ENCODE measurements at regions of chr5 and their contacts with region 1.

Region 1: GRCh38 chr5:148740966-148741742 is 85.3 kb upstream of the ADRB2 start:
- DNase-seq: no peak
- ATAC-seq: peak; percentile 78
- H3K4me3 ChIP-seq: no peak overlapping the region
- H3K27ac ChIP-seq: no peak overlapping the region
- H3K4me1 ChIP-seq: no peaks in the 10 kb centered on the region
- H3K27me3 ChIP-seq: no peaks in the 10 kb centered on the region
- CTCF ChIP-seq: peak; percentile 57 to 73 (median 71)
- EP300 ChIP-seq: no peak
- POLR2A ChIP-seq: no peak
- RAD21 ChIP-seq: peak; percentile 74

Region 2: GRCh38 chr5:148760945-148761638 is 19.9 kb after region 1 on chr5:
- CTCF ChIA-PET with region 1: interaction called, 12 read pairs
- POLR2A ChIA-PET with region 1: no interaction called
- RAD21 ChIA-PET with region 1: interaction called, 6 read pairs
- SMC1A ChIA-PET with region 1: interaction called, 6 read pairs
- in situ Hi-C with region 1: no loop called
- intact Hi-C with region 1: no loop called
- DNase-seq: peak; percentile 59
- ATAC-seq: peak; percentile 100
- H3K4me3 ChIP-seq: no peak overlapping the region
- H3K27ac ChIP-seq: no peak overlapping the region
- H3K4me1 ChIP-seq: peaks cover 8% of the 10 kb centered on the region
- H3K27me3 ChIP-seq: no peaks in the 10 kb centered on the region
- CTCF ChIP-seq: no peak
- EP300 ChIP-seq: no peak
- POLR2A ChIP-seq: no peak
- RAD21 ChIP-seq: no peak

Region 3: DNA sequence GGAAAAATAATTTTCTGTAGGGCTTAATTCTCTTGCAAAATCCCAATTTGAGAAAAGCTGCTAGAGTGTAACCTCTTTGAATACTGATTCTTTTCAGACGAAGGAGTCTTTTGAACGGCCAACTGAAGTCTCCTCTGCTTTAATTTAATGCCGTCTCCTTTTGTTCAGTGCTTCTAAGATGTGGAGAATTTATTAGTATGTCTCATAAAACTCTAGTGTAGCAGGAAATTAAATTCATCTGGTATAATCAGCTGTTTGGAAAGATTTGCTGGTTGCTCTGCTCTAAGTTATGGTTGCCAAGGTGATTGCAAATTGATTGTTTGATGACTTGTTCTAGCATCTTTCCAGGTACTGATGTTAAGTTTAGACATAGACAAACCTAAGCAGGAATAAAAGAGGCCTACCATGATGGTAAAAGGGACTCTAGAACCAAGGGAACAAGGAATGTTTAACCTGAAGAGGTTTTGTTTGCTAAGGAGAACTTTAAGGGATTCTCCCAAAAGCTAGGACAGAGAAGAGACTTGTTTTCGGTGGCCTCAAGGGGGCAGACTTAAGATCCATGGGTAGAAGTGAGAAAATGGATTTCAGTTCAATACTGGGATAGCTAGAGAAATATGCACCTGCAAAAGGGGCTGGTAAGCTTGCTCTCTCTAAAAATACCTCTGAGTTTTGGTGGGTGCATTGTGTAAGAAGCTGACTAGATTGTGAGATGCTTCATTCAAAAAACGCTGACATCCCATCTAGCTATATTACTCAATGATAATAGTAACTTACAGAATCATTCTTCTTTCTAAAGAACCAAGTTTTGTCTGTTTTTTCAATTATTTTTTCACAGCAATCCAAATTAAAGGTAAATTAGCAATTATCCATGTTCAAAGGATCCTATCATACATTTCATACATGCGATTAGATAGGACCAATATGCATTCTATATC is 79.6 kb after region 1 on chr5:
- CTCF ChIA-PET with region 1: interaction called, 66 read pairs
- POLR2A ChIA-PET with region 1: no interaction called
- RAD21 ChIA-PET with region 1: interaction called, 4 read pairs
- SMC1A ChIA-PET with region 1: interaction called, 9 read pairs
- in situ Hi-C with region 1: no loop called
- intact Hi-C with region 1: no loop called
- DNase-seq: no peak
- ATAC-seq: peak; percentile 76
- H3K4me3 ChIP-seq: no peak overlapping the region
- H3K27ac ChIP-seq: no peak overlapping the region
- H3K4me1 ChIP-seq: peaks cover 5% of the 10 kb centered on the region
- H3K27me3 ChIP-seq: no peaks in the 10 kb centered on the region
- CTCF ChIP-seq: peak; percentile 49 to 59 (median 59); a peak in 5 of 6 replicates
- EP300 ChIP-seq: no peak
- POLR2A ChIP-seq: no peak
- RAD21 ChIP-seq: peak; percentile 41

Region 4: GRCh38 chr5:148831590-148832565 is 90.7 kb after region 1 on chr5:
- CTCF ChIA-PET with region 1: interaction called, 10 read pairs
- POLR2A ChIA-PET with region 1: no interaction called
- RAD21 ChIA-PET with region 1: interaction called, 3 read pairs
- SMC1A ChIA-PET with region 1: interaction called, 20 read pairs
- in situ Hi-C with region 1: no loop called
- intact Hi-C with region 1: loop called (anchors 2 kb)
- DNase-seq: peak; percentile 59
- ATAC-seq: peak; percentile 92
- H3K4me3 ChIP-seq: 0 out of 2 replicates have a peak overlapping the region, but pooled peaks have one; percentile 28
- H3K27ac ChIP-seq: peak overlapping the region; percentile 40
- H3K4me1 ChIP-seq: peaks cover 31% of the 10 kb centered on the region
- H3K27me3 ChIP-seq: no peaks in the 10 kb centered on the region; a peak in 1 of 4 replicates
- CTCF ChIP-seq: no peak
- EP300 ChIP-seq: peak in 1 of 2 experiments; percentile 76; a peak in 2 of 4 replicates
- POLR2A ChIP-seq: no peak
- RAD21 ChIP-seq: no peak

Region 5: GRCh38 chr5:148957591-148958202 is 216.5 kb after region 1 on chr5:
- CTCF ChIA-PET with region 1: interaction called, 523 read pairs
- POLR2A ChIA-PET with region 1: no interaction called
- RAD21 ChIA-PET with region 1: interaction called, 104 read pairs
- SMC1A ChIA-PET with region 1: interaction called, 143 read pairs
- in situ Hi-C with region 1: loop called (anchors 5 kb)
- intact Hi-C with region 1: loop called (anchors 1 kb)
- DNase-seq: no peak
- ATAC-seq: peak; percentile 82
- H3K4me3 ChIP-seq: no peak overlapping the region
- H3K27ac ChIP-seq: no peak overlapping the region
- H3K4me1 ChIP-seq: no peaks in the 10 kb centered on the region
- H3K27me3 ChIP-seq: no peaks in the 10 kb centered on the region
- CTCF ChIP-seq: peak; percentile 75 to 87 (median 77)
- EP300 ChIP-seq: no peak
- POLR2A ChIP-seq: no peak
- RAD21 ChIP-seq: peak; percentile 83

Region 6: DNA sequence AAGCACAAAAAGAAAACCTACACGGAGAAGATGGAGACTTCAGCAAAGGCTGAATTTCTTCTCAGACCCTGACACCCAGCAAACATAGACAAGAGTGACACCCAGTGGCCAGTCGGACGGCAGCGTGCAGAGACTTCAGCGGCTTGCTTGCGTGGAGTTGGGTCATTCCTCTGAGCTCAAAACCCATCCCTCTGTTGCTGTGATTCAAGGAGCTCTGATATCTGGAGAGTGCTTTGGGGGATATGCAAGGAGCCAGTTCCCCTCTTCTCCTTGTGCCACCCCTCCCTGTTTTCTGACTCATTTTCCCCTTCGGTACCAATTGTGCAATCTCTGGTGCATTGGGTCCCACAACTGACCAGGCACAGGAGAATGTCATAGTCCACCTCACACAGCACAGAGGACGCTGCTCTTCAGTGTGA is 294.2 kb after region 1 on chr5:
- CTCF ChIA-PET with region 1: interaction called, 335 read pairs
- POLR2A ChIA-PET with region 1: no interaction called
- RAD21 ChIA-PET with region 1: interaction called, 91 read pairs
- SMC1A ChIA-PET with region 1: interaction called, 101 read pairs
- in situ Hi-C with region 1: loop called (anchors 5 kb)
- intact Hi-C with region 1: no loop called
- DNase-seq: no peak
- ATAC-seq: peak; percentile 98
- H3K4me3 ChIP-seq: no peak overlapping the region
- H3K27ac ChIP-seq: no peak overlapping the region
- H3K4me1 ChIP-seq: no peaks in the 10 kb centered on the region
- H3K27me3 ChIP-seq: no peaks in the 10 kb centered on the region
- CTCF ChIP-seq: peak; percentile 82 to 91 (median 88)
- EP300 ChIP-seq: no peak
- POLR2A ChIP-seq: no peak
- RAD21 ChIP-seq: peak; percentile 87

Region 7: GRCh38 chr5:149049371-149049781 is 308.2 kb after region 1 on chr5:
- CTCF ChIA-PET with region 1: no interaction called
- POLR2A ChIA-PET with region 1: no interaction called
- RAD21 ChIA-PET with region 1: no interaction called
- SMC1A ChIA-PET with region 1: no interaction called
- in situ Hi-C with region 1: no loop called
- intact Hi-C with region 1: no loop called
- DNase-seq: no peak
- ATAC-seq: no peak
- H3K4me3 ChIP-seq: no peak overlapping the region
- H3K27ac ChIP-seq: no peak overlapping the region
- H3K4me1 ChIP-seq: no peaks in the 10 kb centered on the region
- H3K27me3 ChIP-seq: 0 out of 4 replicates have a peak, but pooled peaks cover 0 to 2% of the 10 kb centered on the region in 2 experiments
- CTCF ChIP-seq: no peak
- EP300 ChIP-seq: no peak
- POLR2A ChIP-seq: no peak
- RAD21 ChIP-seq: no peak

Region 8: GRCh38 chr5:149268928-149269557 is 527.9 kb after region 1 on chr5:
- CTCF ChIA-PET with region 1: interaction called, 3 read pairs
- POLR2A ChIA-PET with region 1: no interaction called
- RAD21 ChIA-PET with region 1: no interaction called
- SMC1A ChIA-PET with region 1: no interaction called
- in situ Hi-C with region 1: no loop called
- intact Hi-C with region 1: loop called (anchors 5 kb)
- DNase-seq: no peak
- ATAC-seq: peak; percentile 83
- H3K4me3 ChIP-seq: no peak overlapping the region
- H3K27ac ChIP-seq: no peak overlapping the region
- H3K4me1 ChIP-seq: no peaks in the 10 kb centered on the region
- H3K27me3 ChIP-seq: peaks cover 9 to 12% of the 10 kb centered on the region in 2 experiments
- CTCF ChIP-seq: peak; percentile 54 to 56 (median 55)
- EP300 ChIP-seq: no peak
- POLR2A ChIP-seq: no peak
- RAD21 ChIP-seq: peak; percentile 55

Measured in GM12878 (cell line).